Naive thymus-derived CD8-positive, alpha-beta T cell (primary cell): ENCODE measurements at regions of chr6 and their contacts with region 1.

Region 1: GRCh38 chr6:85642774-85643536 is at the start of gene SYNCRIP:
- DNase-seq: peak; percentile 97 to 99 (median 98)
- ATAC-seq: peak; percentile 72 to 83
- H3K4me3 Mint-ChIP-seq: peak within 1 kb of the TSS; percentile 91 to 100 (median 96)
- H3K27ac Mint-ChIP-seq: peak within 1 kb of the TSS; percentile 93 to 100 (median 99)
- H3K4me1 Mint-ChIP-seq: peaks cover 28 to 49% (median 45%) of the 10 kb centered on the region in 4 donors
- H3K27me3 Mint-ChIP-seq: no peaks in the 10 kb centered on the region
- polyA plus RNA-seq, gene SYNCRIP: 68.6 to 80.9 (median 70.7) TPM

Region 2: DNA sequence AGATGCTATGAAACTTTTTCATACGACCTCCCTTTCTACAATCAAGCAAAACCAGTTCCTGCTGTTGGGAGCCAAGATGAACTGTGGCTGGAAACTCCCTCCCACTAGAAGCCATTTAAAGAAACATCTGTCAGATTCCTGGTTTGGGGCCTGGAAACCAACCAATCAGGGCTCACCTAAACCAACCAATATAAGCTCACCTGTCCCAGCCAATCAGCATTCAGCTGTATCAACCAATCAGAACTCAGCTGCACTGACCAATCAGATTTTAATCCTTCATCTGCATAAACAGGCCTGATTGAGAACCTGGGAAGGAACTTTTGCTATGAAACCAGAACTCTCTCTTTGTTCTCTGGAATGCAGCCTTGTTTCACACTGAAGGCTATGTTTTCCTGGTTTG is 91.7 kb before region 1 on chr6:
- POLR2A ChIA-PET with region 1: interaction called, 13 read pairs
- DNase-seq: no peak
- ATAC-seq: no peak
- H3K4me3 Mint-ChIP-seq: no peak overlapping the region
- H3K27ac Mint-ChIP-seq: peak overlapping the region in 3 of 10 donors; percentile 5 to 43 (median 5)
- H3K4me1 Mint-ChIP-seq: no peaks in the 10 kb centered on the region
- H3K27me3 Mint-ChIP-seq: no peaks in the 10 kb centered on the region

Region 3: DNA sequence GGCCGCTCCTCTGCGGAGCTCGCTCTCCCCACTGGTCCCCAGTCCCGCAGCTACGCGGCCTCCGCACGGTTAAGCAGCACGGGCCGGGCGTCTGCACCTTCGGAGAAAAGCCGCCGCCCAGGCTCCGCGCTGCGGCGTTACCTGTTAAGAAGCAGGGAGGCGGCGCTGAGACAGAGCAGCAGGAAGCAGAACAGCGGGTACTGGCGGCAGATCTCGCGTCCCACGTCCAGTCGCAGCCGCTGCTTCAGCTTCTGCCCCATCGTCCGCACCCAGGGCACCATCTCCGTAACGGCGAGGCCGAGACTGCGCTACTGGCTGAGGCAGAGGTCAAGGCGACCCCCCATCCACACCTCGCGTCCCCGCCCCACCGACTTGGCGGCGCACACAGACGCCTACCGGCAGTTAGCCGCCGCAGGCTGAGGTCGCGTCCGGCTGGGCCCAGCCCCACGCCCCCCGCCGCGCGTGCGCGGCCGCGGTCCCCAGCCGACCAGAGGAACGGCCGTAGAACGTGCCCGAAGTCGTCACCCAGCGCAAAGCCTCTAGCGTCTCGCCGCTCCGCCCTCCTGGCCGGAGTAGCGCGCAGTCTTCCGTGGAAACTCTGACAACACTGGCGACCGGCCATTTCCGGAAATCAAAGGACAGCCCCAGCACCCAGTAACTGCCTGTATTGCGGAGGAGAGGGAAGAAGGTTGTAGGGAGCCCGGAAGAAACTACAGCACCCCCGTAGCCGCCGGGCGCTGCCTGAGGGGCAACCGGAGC is 49.3 kb before region 1 on chr6 and contains the start of gene SNX14:
- POLR2A ChIA-PET with region 1: interaction called, 77 read pairs
- DNase-seq: peak; percentile 60 to 90 (median 76)
- ATAC-seq: peak; percentile 82 to 84
- H3K4me3 Mint-ChIP-seq: peak within 1 kb of the TSS; percentile 92 to 99 (median 96)
- H3K27ac Mint-ChIP-seq: peak within 1 kb of the TSS; percentile 92 to 98 (median 98)
- H3K4me1 Mint-ChIP-seq: peaks cover 27 to 56% (median 49%) of the 10 kb centered on the region in 4 donors
- H3K27me3 Mint-ChIP-seq: no peaks in the 10 kb centered on the region
- polyA plus RNA-seq, gene SNX14: 40.9 to 54.6 (median 45.7) TPM

Region 4: GRCh38 chr6:85669735-85670194 is 26.8 kb after region 1 on chr6:
- POLR2A ChIA-PET with region 1: interaction called, 570 read pairs
- DNase-seq: peak in 8 of 10 donors; percentile 8 to 69 (median 34)
- ATAC-seq: peak; percentile 94 to 96
- H3K4me3 Mint-ChIP-seq: peak overlapping the region; percentile 45 to 83 (median 61)
- H3K27ac Mint-ChIP-seq: peak overlapping the region; percentile 38 to 97 (median 94)
- H3K4me1 Mint-ChIP-seq: peaks cover 28 to 61% (median 56%) of the 10 kb centered on the region in 4 donors
- H3K27me3 Mint-ChIP-seq: no peaks in the 10 kb centered on the region

Region 5: DNA sequence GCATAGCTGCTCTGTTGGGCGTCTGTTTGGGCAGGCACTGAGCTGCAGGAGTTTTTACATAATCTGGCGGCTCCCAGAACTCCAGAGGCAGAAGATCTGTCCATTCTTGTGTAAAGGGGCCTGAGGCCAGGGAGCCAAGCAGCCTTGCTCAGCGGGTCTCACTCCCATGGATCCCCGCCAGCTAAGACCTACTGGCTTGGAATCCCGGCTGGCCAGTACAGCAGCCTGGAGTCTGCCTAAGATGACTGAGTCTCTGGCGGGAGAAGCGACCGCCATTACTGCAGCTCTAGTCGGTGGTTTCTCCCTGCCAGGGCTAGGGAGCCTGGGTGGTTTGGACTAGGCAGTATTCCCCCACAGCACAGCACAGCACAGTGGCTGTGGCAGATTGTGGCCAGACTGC is 268.1 kb after region 1 on chr6:
- POLR2A ChIA-PET with region 1: no interaction called
- DNase-seq: no peak
- ATAC-seq: no peak
- H3K4me3 Mint-ChIP-seq: no peak overlapping the region
- H3K27ac Mint-ChIP-seq: no peak overlapping the region
- H3K4me1 Mint-ChIP-seq: no peaks in the 10 kb centered on the region
- H3K27me3 Mint-ChIP-seq: peaks cover 0 to 21% (median 12%) of the 10 kb centered on the region in 5 donors